Natural killer cell (primary cell): ENCODE measurements at regions of chr5 and their contacts with region 1.

Region 1: GRCh38 chr5:43484106-43484849 is 613 bp upstream of the TMEM267 start:
- DNase-seq: peak; percentile 80 to 91
- ATAC-seq: peak; percentile 75 to 86 (median 76)
- H3K4me3 ChIP-seq: peak overlapping the region; percentile 95
- H3K4me3 Mint-ChIP-seq: peak overlapping the region; percentile 97
- H3K27ac ChIP-seq: peak overlapping the region; percentile 99
- H3K27ac Mint-ChIP-seq: peak overlapping the region; percentile 97 to 99
- H3K4me1 ChIP-seq: peaks cover 11% of the 10 kb centered on the region
- H3K4me1 Mint-ChIP-seq: peaks cover 34 to 35% of the 10 kb centered on the region in 2 donors
- H3K27me3 ChIP-seq: no peaks in the 10 kb centered on the region
- H3K27me3 Mint-ChIP-seq: no peaks in the 10 kb centered on the region
- CTCF ChIP-seq: peak; percentile 74

Region 2: DNA sequence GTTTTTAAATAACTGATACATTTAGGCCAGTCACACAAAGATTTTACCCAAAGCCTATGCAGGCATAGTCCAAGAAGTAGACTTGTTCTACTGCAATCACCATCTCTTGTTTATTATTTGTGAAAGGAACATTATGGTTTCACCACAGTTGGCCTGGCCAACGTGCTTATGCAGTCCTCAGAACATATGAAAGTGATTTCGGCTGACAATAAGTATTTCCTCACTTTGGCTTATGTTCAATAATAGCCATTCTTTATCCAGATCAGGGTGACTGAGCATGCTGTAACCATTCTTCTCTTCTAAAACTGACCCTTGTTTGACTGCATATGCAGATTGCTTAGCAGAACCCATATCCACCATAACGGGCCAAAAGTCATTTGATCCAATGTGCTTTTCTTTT is 804.2 kb before region 1 on chr5:
- intact Hi-C with region 1: no loop called
- DNase-seq: no peak
- ATAC-seq: no peak
- H3K4me3 ChIP-seq: no peak overlapping the region
- H3K4me3 Mint-ChIP-seq: no peak overlapping the region
- H3K27ac ChIP-seq: no peak overlapping the region
- H3K27ac Mint-ChIP-seq: no peak overlapping the region
- H3K4me1 ChIP-seq: no peaks in the 10 kb centered on the region
- H3K4me1 Mint-ChIP-seq: peaks cover 6 to 8% of the 10 kb centered on the region in 2 donors
- H3K27me3 ChIP-seq: no peaks in the 10 kb centered on the region
- H3K27me3 Mint-ChIP-seq: peaks cover 0 to 4% of the 10 kb centered on the region in 2 donors
- CTCF ChIP-seq: no peak

Region 3: DNA sequence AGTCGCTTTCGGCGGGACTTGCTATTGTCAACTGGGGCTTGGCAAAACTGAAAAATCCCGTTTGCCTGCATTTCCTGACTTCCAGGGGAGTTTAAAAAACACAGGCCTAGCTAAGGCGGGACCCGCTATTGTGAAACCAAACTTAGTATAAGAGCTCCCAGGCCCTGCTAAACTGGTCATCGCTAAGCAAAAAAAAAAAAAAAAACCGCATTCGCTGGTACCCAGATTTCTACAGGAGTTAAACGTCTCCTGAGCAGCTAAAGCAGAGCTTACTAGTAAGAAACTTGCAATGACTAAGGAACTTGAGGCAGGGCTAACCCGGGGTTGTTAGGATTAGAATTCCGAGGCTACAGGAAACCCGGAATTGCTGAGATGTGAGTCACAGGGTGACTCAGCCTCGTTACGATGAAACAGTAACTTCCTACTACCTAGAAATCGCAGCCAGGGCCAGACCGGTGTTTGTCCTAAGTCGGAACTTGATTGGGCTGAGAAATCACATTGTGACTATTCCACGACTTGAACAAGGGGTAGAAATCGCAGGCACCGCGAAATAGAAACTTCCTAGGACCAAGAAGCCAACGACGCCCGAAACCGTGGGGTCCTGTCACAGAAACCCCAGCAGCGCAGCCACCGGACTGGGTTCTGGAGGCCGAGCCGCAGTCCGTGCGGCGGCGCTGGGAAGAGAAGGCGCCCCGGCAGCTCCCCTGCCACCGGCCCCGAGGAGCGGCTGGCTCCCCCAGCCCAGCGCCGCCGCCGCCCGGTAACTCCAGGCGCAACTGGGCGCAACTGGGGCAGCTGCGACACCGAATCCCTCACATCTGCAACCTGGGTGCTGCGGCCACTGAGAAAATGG is 533.6 kb before region 1 on chr5:
- intact Hi-C with region 1: loop called (anchors 5 kb)
- DNase-seq: peak; percentile 66 to 85
- ATAC-seq: peak; percentile 38 to 66 (median 53)
- H3K4me3 ChIP-seq: peak overlapping the region; percentile 73
- H3K4me3 Mint-ChIP-seq: peak overlapping the region; percentile 88
- H3K27ac ChIP-seq: peak overlapping the region; percentile 98
- H3K27ac Mint-ChIP-seq: peak overlapping the region; percentile 97 to 99
- H3K4me1 ChIP-seq: peaks cover 45% of the 10 kb centered on the region
- H3K4me1 Mint-ChIP-seq: peaks cover 33 to 44% of the 10 kb centered on the region in 2 donors
- H3K27me3 ChIP-seq: no peaks in the 10 kb centered on the region
- H3K27me3 Mint-ChIP-seq: no peaks in the 10 kb centered on the region
- CTCF ChIP-seq: no peak

Region 4: DNA sequence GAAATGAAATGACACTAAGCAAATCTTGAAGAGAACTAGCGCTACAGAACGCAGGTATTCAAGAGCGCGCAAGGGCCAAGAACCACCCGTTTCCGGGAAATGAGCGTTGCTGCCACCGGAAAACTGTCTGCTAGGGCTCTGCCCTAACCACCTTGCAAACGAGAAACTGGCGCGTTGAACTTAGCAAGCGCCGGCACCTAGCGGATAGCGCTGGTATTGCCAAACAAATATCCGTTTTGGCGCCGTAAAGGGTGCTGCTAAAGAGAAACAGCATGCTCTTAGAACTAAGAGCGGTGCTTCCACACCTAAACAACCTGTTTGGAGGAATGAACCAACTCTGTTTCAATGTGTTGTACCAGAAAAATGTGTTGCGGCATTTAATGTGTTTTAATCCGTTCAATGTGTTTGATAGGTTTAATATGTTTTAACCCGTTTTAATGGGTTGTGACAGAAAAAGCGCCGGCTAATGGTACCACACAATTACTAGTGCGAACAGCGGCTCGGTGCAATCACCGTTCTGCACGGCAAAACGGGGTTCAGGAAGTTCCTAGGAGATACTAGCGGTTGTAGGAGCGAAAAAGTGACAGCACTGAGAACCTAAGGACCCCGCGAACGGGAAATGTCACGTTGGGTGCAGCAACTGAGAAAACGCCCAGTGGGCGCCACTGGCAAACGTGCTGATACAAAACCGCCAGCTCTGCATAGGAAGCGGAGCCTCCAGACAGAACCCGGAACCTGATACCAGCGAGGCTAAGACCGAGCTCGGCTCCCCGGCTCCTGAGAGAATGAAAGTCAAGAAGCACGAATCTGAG is 443.8 kb before region 1 on chr5 and contains the start of gene ANXA2R:
- intact Hi-C with region 1: loop called (anchors 2 kb)
- DNase-seq: peak; percentile 83 to 98
- ATAC-seq: peak; percentile 54 to 73 (median 56)
- H3K4me3 ChIP-seq: peak within 1 kb of the TSS; percentile 74
- H3K4me3 Mint-ChIP-seq: peak within 1 kb of the TSS; percentile 93
- H3K27ac ChIP-seq: peak within 1 kb of the TSS; percentile 98
- H3K27ac Mint-ChIP-seq: peak within 1 kb of the TSS; percentile 92 to 96
- H3K4me1 ChIP-seq: peaks cover 61% of the 10 kb centered on the region
- H3K4me1 Mint-ChIP-seq: peaks cover 74 to 83% of the 10 kb centered on the region in 2 donors
- H3K27me3 ChIP-seq: no peaks in the 10 kb centered on the region
- H3K27me3 Mint-ChIP-seq: no peaks in the 10 kb centered on the region
- CTCF ChIP-seq: peak; percentile 72
- total RNA-seq, gene ANXA2R: 34.3 to 55.2 (median 38.0) TPM

Region 5: DNA sequence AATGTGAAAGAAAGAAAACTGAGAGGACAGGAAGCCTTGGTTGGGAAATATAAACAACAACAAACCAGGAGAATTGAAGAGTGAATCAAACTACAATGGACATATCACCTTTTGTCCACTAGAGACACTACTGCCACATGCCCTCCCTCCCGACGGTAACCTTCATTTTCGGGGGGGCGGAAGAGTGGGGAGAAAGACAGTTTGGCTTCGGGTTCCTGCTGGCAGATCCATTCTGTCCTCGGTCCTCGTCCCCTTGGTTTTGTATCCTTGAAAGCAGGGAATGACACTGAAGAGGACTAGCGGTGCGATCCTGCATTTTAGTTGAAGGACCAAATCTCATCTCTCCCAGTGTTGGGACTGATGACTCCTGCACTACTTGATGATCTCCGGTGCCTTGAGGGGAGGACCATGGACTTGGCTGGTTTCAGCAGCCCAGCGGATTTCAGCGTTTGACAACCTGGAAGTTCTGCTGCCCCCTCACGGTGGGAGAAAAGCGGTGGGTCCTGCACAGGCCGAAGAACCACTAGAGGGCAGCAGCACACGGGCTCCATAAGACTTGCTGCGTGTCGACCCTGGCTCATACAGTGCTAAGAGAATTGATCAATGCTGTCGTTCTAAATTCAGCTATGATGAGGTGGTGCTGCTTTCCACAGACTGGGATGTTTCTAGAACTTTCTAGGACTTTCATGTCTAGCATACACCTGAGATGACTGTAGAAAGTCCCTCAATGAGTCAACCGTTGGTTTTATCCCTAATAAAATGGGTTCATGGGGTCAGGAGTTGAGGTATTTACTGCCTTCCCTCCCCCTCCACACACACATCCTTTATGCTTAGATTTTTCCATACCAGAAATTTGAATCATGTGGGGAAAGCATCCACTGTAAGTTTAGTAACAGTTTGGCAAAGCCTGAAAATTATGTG is 378.6 kb before region 1 on chr5:
- intact Hi-C with region 1: loop called (anchors 5 kb)
- DNase-seq: peak; percentile 87 to 98
- ATAC-seq: peak; percentile 92 to 99 (median 94)
- H3K4me3 ChIP-seq: peak overlapping the region; percentile 35
- H3K4me3 Mint-ChIP-seq: peak overlapping the region; percentile 88
- H3K27ac ChIP-seq: peak overlapping the region; percentile 64
- H3K27ac Mint-ChIP-seq: peak overlapping the region; percentile 87 to 91
- H3K4me1 ChIP-seq: peaks cover 16% of the 10 kb centered on the region
- H3K4me1 Mint-ChIP-seq: peaks cover 12 to 25% of the 10 kb centered on the region in 2 donors
- H3K27me3 ChIP-seq: no peaks in the 10 kb centered on the region
- H3K27me3 Mint-ChIP-seq: no peaks in the 10 kb centered on the region
- CTCF ChIP-seq: peak; percentile 100

Region 6: DNA sequence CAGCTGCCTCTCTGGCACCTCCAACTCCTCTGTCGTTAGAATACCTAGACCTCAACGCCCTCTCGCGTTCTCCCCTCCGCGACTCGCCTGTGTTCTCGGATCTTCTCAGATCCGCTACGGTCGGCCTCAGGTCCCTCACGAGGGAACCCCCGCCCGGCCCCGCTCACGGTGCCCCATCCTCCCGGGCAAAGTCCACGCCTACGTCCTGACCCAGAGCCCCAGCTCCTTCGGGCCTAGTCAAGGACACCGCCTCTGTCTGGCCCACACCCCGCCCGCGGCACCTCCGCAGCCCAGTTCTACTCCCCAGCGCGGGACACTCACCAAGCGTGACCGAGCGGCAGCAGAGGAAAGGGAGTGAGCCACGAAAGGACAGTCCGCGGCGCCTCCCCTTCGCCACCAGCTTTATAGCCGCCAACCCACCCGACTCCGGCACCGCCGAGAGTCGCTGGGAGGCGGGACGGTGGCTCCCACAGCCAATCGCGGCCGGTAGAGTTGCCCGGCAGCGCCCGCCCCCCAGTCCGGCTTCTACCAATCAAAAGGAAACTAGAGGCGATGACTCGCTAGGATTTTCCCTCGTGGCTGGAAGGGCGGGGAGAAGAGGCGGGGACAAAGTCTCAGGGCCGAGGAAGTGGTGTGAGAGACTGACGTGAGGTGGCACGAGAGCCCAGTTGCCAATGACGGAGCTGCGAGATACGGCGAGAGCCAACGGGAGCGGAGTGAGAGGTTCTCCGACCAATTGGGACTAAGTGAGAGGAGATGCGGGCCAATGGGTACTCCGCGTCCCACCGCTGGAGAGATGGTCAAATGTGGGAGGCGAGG is 171.0 kb before region 1 on chr5 and contains the start of gene HMGCS1:
- intact Hi-C with region 1: loop called (anchors 1 kb)
- DNase-seq: peak; percentile 99
- ATAC-seq: peak; percentile 86 to 95 (median 86)
- H3K4me3 ChIP-seq: peak within 1 kb of the TSS; percentile 82
- H3K4me3 Mint-ChIP-seq: peak within 1 kb of the TSS; percentile 94
- H3K27ac ChIP-seq: peak within 1 kb of the TSS; percentile 98
- H3K27ac Mint-ChIP-seq: peak within 1 kb of the TSS; percentile 98 to 99
- H3K4me1 ChIP-seq: peaks cover 17% of the 10 kb centered on the region
- H3K4me1 Mint-ChIP-seq: peaks cover 32 to 37% of the 10 kb centered on the region in 2 donors
- H3K27me3 ChIP-seq: no peaks in the 10 kb centered on the region
- H3K27me3 Mint-ChIP-seq: peaks cover 0 to 3% of the 10 kb centered on the region in 2 donors
- CTCF ChIP-seq: no peak
- total RNA-seq, gene HMGCS1: 53.0 to 105 (median 85.8) TPM

Region 7: DNA sequence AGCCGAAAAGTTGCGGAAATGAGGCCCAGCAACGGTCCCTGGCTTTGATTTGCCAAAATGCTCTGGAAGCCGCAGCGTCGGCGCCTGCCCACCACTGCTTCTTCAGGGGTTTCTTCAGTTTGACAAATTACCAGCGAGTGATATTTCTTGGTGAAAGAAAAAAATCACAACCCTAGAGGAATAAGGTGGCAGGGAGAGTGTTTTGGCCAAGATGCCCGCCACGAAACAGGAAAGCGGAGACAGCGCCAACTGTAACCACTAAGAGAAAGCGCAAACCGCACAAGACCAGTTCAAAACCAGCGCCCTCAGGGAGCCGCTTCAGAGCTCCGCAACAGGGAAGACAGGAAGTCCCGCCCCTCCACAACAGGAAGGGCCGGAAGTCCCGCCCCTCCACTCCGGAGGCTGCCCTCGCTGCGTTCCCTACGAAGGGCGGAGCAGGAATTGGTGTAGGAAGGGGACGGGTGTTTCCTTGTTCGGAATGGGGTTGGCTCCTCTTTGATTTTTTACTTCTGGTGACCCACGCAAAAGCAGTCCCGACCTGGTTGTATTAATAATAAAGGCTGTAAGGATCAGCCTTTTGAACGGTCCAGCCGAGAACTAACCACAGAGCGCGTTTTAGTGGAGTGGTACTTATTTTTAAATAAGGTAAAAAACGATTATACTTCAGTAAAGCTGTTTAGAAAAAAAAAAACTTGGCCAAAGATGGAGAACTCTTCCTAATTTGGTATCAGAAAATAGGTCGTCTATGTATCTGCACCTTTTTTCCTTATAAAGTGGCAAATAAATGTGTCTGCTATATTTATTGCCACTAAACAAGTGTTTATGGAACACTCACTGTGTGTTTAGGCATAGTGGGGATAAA is 30.8 kb after region 1 on chr5 and contains the start of gene C5orf34:
- intact Hi-C with region 1: loop called (anchors 1 kb)
- DNase-seq: peak; percentile 90 to 97
- ATAC-seq: peak; percentile 94 to 98 (median 95)
- H3K4me3 ChIP-seq: peak within 1 kb of the TSS; percentile 83
- H3K4me3 Mint-ChIP-seq: peak within 1 kb of the TSS; percentile 92
- H3K27ac ChIP-seq: peak within 1 kb of the TSS; percentile 91
- H3K27ac Mint-ChIP-seq: peak within 1 kb of the TSS; percentile 91 to 93
- H3K4me1 ChIP-seq: peaks cover 4% of the 10 kb centered on the region
- H3K4me1 Mint-ChIP-seq: peaks cover 24 to 31% of the 10 kb centered on the region in 2 donors
- H3K27me3 ChIP-seq: no peaks in the 10 kb centered on the region
- H3K27me3 Mint-ChIP-seq: peaks cover 0 to 5% of the 10 kb centered on the region in 2 donors
- CTCF ChIP-seq: no peak
- total RNA-seq, gene C5orf34: 1.1 to 1.8 (median 1.3) TPM

Region 8: GRCh38 chr5:43602461-43603343 is 118.4 kb after region 1 on chr5 and contains the start of gene NNT:
- intact Hi-C with region 1: loop called (anchors 5 kb)
- DNase-seq: peak; percentile 76 to 86
- ATAC-seq: peak; percentile 73 to 87 (median 80)
- H3K4me3 ChIP-seq: peak within 1 kb of the TSS; percentile 91
- H3K4me3 Mint-ChIP-seq: peak within 1 kb of the TSS; percentile 92
- H3K27ac ChIP-seq: peak within 1 kb of the TSS; percentile 81
- H3K27ac Mint-ChIP-seq: peak within 1 kb of the TSS; percentile 94 to 98
- H3K4me1 ChIP-seq: peaks cover 23% of the 10 kb centered on the region
- H3K4me1 Mint-ChIP-seq: peaks cover 50 to 56% of the 10 kb centered on the region in 2 donors
- H3K27me3 ChIP-seq: no peaks in the 10 kb centered on the region
- H3K27me3 Mint-ChIP-seq: no peaks in the 10 kb centered on the region
- CTCF ChIP-seq: no peak
- total RNA-seq, gene NNT: 57.0 to 66.1 (median 64.6) TPM